Activated CD8-positive, alpha-beta T cell treated with anti-CD3 and anti-CD28 coated beads, Interleukin-2, amount 10 ng/mL, durations not matched to agents 7 days and 5 days (primary cell): ENCODE measurements at regions of chr11 and their contacts with region 1.

Region 1: DNA sequence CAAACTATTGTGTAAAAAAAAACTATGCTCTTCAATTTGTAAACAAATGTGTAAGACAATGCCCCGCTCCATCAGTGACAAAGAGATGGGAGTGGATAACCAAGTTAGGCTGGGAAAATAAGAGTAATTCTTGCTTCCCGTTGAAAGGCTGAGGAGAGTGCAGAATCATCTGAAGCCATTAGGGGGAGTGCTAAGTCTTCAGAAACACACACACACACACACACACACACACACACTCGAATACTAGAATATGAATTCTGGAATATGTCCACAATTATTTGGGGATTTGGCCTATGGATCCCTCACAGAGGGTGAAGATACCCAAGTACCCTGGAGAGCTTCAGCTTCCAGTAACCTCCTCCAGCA is 27.8 kb upstream of the ROBO3 start:
- DNase-seq: no peak
- ATAC-seq: peak; percentile 29
- H3K4me3 Mint-ChIP-seq: no peak overlapping the region
- H3K27ac Mint-ChIP-seq: no peak overlapping the region
- H3K4me1 Mint-ChIP-seq: peaks cover 24% of the 10 kb centered on the region
- H3K27me3 Mint-ChIP-seq: peaks cover 61% of the 10 kb centered on the region

Region 2: DNA sequence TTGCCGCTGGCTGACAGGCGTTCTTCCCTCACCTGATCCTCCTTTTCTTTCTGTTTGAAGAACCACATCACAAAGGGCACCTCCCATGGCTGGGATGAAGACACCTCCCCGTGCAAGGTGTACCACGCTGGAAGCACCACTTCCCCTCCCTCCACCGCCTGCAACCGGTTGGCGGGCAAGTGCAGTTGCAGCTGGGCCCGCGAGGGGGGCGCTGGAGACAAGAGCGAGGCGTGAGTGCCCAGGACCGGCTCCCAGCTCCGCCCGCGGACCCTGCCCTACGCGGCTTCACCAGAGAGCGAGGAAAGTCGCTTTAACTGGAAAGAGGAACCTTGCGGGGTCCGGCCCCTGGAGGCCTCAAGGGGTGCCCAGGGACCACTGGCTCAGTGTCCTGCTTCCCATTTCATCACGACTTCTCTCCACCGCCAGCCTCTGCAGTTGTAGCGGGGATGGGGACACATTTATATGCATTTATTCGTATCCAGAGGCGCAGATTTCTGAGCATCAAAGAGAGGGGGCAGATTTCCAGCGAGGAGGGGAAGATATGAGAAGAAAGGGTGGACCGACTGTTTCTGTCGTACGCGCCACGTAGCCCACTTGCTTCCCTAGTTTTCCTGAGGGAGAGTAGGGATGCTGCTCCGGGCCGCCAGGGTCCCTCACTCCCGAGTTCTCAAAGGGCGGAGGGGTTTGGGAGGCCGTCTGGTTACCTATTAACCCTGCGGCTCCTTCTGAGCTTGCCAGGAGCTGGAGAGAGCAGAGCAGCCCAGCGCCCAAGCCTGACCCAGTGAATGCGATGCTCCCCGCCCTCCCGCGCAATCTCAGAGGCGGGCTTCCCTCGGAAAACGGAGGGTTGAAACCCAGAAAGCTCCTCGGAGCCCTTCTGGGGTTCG is 78.9 kb before region 1 on chr11:
- CTCF ChIA-PET with region 1: interaction called, 34 read pairs
- POLR2A ChIA-PET with region 1: no interaction called
- DNase-seq: peak; percentile 78
- ATAC-seq: peak; percentile 70
- H3K4me3 Mint-ChIP-seq: peak overlapping the region; percentile 58
- H3K27ac Mint-ChIP-seq: no peak overlapping the region
- H3K4me1 Mint-ChIP-seq: peaks cover 39% of the 10 kb centered on the region
- H3K27me3 Mint-ChIP-seq: peaks cover 46% of the 10 kb centered on the region

Region 3: DNA sequence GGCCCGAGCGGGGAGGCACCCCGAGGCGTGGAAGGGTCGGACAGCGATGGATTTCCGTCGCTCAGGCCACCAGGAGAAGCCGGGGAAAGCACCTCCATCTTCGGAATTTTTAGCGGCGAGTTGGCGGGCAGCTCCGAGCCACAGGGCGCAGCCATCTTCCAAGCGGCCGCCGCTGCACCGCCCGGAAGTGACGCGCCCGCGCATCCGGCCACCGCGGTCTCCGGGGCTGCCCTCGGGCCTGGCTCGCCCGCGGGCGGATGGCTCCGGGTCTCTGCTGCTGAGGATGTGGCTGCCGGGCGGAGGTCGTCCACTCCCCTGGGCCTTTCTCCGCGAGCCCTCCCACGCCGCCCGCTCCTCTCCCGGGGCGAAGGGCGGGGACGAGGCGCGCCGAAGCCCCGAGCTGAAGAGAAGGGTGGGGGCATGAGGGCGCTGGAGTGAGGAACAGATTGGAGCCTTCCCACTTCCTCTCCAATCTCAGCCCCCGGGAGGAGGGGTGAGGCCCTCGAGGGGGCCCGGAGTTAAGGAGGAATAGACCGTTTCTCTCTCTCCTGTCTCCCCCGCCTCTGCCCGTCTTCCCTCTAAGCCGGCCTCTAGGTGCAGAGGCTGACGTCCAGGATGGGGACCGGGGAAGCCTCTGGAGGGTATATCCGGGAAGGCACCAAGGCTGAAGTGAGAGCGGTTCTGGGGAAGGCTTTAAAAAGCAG is 37.1 kb before region 1 on chr11 and contains the start of gene MSANTD2:
- CTCF ChIA-PET with region 1: interaction called, 26 read pairs
- POLR2A ChIA-PET with region 1: interaction called, 3 read pairs
- DNase-seq: peak; percentile 83
- ATAC-seq: peak; percentile 90
- H3K4me3 Mint-ChIP-seq: peak within 1 kb of the TSS; percentile 85
- H3K27ac Mint-ChIP-seq: peak within 1 kb of the TSS; percentile 93
- H3K4me1 Mint-ChIP-seq: peaks cover 26% of the 10 kb centered on the region
- H3K27me3 Mint-ChIP-seq: peaks cover 12% of the 10 kb centered on the region
- total RNA-seq, gene MSANTD2: 9.1 to 10.2 TPM

Region 4: DNA sequence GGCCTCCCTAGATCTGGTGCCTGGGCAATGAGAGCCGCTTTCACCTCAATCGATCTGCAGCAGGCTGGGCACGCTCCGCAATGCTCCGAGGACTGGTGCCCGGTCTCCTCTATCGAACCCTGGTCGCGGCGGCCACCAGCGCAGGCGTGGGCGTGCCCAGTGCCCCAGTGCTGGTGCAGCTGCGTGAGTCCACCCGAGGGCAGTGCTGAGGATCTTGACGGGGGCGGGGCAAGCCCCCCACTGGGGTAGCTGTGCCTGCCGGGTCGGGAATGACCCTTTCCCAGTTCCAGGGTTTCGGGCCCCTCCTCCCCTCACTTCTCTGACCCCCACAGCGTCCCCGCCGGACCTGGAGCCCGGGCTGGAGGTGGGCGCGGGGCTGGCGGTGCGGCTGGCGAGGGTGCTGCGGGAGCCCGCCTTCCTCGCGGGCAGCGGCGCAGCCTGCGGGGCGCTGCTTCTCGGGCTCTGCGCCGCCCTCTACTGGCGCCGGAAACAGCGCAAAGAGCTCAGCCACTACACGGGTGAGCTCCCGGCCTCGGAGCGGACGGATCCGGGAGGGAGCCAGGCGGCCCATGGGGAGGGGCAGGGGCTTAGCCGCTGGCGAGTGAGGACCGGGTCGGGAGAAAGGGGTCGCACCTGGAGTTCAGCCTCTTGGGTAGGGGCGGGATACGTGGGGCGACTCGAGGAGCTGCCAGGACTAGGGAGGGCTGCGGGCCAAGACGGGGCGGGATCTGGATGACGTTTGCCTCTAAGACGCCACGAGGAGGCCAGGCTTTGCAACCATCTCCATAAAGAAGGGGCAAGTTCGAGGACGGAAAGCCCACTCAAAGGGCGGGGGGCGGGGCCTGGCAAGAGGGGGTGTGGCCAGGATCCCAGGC is 38.7 kb after region 1 on chr11:
- CTCF ChIA-PET with region 1: interaction called, 17 read pairs
- POLR2A ChIA-PET with region 1: no interaction called
- DNase-seq: peak; percentile 86
- ATAC-seq: peak; percentile 95
- H3K4me3 Mint-ChIP-seq: peak overlapping the region; percentile 84
- H3K27ac Mint-ChIP-seq: peak overlapping the region; percentile 93
- H3K4me1 Mint-ChIP-seq: peaks cover 24% of the 10 kb centered on the region
- H3K27me3 Mint-ChIP-seq: peaks cover 41% of the 10 kb centered on the region